ENCODE measurements at regions of chr6 and their contacts with region 1.

Region 1: DNA sequence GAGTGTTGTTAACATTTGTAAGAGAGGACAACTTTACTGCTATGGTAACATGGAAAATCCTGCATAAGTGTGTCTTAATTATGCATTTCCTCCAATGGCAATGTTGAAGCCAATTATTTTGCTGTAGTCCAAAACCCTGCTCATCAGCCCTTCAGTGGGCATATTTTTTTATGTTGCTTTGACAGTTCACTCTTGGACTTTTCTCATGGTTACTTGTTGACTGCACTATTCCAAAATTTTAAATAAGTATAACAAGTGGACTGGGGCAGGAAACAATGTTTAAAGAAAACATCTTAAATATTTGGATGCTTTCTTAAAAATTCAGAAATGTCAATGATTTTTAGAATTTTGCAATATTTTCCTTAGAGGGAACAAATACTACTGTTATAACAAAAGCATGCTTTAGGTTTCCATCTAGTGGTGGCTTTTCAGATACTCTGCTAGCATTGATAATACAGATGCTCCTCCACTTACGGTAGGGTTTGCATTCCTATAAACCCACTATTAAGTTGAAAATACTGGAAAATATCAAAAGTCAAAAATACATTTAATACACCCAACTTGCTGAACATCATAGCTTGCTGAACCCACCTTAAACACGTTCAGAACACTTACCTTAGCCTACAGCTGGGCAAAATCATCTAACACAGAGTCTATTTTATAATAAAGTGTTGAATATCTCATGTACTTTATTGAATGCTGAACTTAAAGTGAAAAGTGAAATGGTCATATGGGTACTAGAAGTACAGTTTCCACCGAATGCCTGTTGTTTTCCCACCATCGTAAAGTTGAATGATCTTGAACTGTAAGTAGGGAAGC is 86.4 kb downstream of the ADGRG6 start:
- DNase-seq: no peak
- ATAC-seq: peak; percentile 49
- H3K4me3 Mint-ChIP-seq: no peak overlapping the region
- H3K27ac Mint-ChIP-seq: no peak overlapping the region
- H3K4me1 Mint-ChIP-seq: peaks cover 2% of the 10 kb centered on the region
- H3K27me3 Mint-ChIP-seq: peaks cover 3% of the 10 kb centered on the region

Region 2: DNA sequence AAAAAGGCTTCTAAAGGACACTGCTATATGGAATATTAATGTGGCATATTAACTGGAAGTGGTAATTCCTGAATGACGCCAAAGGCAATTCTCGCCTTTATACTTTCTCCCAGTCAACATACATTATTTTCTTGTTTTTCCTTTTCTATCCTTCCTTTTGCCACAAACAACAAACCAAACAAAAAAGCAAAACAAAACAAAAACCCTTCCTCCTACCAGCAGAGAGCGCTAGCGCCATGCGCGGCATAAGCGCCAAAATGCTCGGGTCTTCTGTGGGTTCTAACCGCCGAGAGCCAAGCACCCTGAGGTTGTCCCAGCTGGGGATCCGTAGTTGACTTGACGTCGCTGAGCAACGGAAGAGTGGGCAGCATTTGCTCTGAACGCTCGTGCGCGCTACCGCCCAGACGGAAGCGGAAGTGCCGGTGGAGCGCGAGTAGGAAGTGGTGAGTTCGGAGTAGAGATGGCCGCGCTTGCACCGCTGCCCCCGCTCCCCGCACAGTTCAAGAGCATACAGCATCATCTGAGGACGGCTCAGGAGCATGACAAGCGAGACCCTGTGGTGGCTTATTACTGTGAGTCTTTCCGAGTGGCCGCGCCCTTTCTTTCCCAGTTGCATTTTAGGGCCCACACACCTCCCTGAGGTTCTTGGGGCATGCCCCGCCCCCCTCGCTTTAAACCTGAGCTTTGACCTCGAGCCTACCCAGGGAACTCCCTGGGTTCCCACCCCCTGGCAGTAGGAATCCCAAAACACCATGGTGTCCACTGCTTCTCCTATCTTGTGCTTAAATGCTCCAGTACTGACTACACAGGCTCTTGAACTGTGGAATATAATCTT is 241.2 kb before region 1 on chr6 and contains the starts of genes NMBR and VTA1:
- CTCF ChIA-PET with region 1: interaction called, 18 read pairs
- POLR2A ChIA-PET with region 1: interaction called, 3 read pairs
- DNase-seq: peak; percentile 98
- ATAC-seq: peak; percentile 99
- H3K4me3 Mint-ChIP-seq: peak within 1 kb of the TSS; percentile 90
- H3K27ac Mint-ChIP-seq: peak within 1 kb of the TSS; percentile 89
- H3K4me1 Mint-ChIP-seq: peaks cover 42% of the 10 kb centered on the region
- H3K27me3 Mint-ChIP-seq: no peaks in the 10 kb centered on the region
- total RNA-seq, gene NMBR: not detected
- total RNA-seq, gene VTA1: 47.2 to 51.2 TPM

Region 3: DNA sequence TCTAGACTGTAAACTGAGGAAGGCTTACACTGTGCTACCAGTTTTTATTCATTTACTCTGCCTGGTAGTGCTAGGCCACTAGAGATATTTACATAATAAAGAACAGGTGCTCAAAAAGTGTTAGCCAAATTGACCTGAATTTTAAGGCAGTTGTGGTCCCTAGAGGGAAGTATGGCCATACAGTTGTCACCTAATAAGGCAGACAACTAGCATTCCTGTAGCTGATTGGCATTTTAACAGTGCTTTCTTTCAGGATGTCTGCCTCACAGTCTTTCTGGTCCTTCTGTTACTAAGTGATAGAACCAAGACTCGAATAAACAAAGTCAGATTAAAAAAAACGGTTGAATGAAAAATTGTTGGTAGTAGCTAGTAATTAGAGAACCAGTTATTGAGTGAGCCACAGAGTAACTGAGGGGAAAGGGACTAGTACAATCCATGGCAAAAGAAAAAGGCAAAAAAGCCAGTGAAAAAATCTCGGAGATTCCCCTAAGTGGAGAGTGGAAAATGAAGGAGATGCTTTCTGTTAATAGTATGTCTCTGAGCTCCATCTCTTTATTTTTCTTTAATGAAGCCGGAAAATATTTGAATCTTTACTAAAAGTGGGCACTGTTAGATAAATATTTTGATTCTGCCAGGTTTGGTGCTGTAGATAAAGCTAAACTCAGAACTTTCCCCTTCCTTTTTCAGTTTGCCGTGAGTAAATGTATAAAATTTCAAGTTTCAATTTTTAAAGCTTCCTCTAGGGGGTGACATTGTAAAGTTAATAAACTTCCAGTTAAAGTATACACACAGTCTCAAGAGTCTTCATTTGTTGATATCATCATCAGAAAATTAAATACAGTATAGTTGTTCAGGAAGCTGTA is 232.1 kb before region 1 on chr6:
- CTCF ChIA-PET with region 1: interaction called, 26 read pairs
- POLR2A ChIA-PET with region 1: no interaction called
- DNase-seq: no peak
- ATAC-seq: peak; percentile 63
- H3K4me3 Mint-ChIP-seq: no peak overlapping the region
- H3K27ac Mint-ChIP-seq: no peak overlapping the region
- H3K4me1 Mint-ChIP-seq: peaks cover 20% of the 10 kb centered on the region
- H3K27me3 Mint-ChIP-seq: no peaks in the 10 kb centered on the region

Region 4: GRCh38 chr6:142236691-142237090 is 151.5 kb before region 1 on chr6:
- CTCF ChIA-PET with region 1: interaction called, 13 read pairs
- POLR2A ChIA-PET with region 1: no interaction called
- DNase-seq: no peak
- ATAC-seq: no peak
- H3K4me3 Mint-ChIP-seq: no peak overlapping the region
- H3K27ac Mint-ChIP-seq: no peak overlapping the region
- H3K4me1 Mint-ChIP-seq: peaks cover 12% of the 10 kb centered on the region
- H3K27me3 Mint-ChIP-seq: peaks cover 2% of the 10 kb centered on the region

Region 5: DNA sequence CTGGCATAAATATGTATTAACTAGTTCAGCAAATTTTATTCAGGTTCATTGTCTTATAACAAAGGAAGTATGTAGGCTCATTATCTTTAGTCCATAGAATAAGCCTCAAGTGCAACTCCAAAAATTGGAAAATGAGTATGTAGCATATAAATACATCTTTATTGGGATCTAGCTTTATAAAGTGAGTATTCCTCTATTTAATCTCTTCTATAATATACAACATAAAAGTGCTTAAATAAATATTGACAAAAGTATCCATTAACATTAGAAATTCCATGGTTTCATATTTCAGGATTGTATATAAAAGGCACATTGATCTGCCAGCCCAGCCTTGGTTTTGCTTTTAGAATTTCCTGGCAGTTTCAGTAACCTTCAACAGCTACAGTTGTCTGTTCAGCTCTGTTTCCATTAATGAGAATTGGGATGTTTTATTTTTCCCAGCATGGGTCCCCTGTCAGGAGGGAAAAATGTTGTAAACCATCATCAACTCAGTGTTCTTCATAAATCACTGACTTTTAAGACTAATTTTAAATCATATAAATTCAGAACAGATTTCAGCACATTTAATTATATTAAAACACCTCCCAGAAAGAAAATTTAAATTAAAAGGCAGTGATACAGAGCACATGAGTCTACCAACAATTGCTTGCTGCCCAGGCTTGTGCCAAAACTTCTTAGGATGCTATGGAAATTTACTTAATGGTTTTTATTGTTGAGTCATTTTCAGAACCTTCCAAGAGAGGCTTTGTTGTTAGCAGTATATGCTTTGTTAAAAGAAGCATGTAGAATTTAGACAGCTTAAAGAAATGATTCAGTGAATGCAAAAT is 33.3 kb after region 1 on chr6:
- CTCF ChIA-PET with region 1: no interaction called
- POLR2A ChIA-PET with region 1: no interaction called
- DNase-seq: no peak
- ATAC-seq: no peak
- H3K4me3 Mint-ChIP-seq: no peak overlapping the region
- H3K27ac Mint-ChIP-seq: no peak overlapping the region
- H3K4me1 Mint-ChIP-seq: no peaks in the 10 kb centered on the region
- H3K27me3 Mint-ChIP-seq: no peaks in the 10 kb centered on the region